Activated CD4-positive, alpha-beta T cell treated with anti-CD3 and anti-CD28 coated beads, Interleukin-2, amount 10 ng/mL, durations not matched to agents 24 days and 14 days (primary cell): ENCODE measurements at regions of chr3 and their contacts with region 1.

Region 1: DNA sequence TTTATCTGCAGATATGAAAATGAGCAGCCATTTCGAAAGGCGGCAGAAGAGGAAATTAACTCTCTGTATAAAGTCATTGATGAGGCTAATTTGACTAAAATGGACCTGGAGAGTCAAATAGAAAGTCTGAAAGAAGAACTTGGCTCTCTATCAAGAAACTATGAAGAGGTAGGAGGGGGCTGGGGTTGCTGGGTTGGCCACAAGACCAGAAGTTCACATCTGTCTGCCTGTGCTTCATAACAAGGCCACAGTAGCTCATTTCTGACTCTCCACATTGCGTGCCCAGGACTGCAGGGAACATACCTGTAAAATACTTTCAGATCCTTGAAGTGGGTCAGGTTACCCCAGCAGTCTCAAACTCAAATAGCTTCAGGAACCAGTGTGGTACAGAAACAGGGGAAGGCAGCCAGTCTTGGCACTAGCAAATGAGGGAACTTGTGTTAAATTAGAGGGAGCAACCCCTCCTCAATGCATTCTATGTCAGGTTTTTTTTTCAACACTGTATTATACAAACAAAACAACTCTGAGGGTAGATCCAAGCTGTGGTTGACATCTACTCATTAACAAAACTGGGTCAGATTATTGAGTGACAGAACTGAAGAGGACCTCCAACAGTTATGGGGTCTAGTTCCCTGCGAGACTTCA is 48.7 kb downstream of the BFSP2 start:
- DNase-seq: peak; percentile 75
- H3K4me3 Mint-ChIP-seq: no peak overlapping the region
- H3K27ac Mint-ChIP-seq: peak overlapping the region; percentile 69
- H3K4me1 Mint-ChIP-seq: peaks cover 26% of the 10 kb centered on the region
- H3K27me3 Mint-ChIP-seq: peaks cover 3% of the 10 kb centered on the region

Region 2: GRCh38 chr3:133464573-133464972 is 16.0 kb after region 1 on chr3:
- intact Hi-C with region 1: loop called (anchors 2 kb)
- DNase-seq: no peak
- H3K4me3 Mint-ChIP-seq: no peak overlapping the region
- H3K27ac Mint-ChIP-seq: no peak overlapping the region
- H3K4me1 Mint-ChIP-seq: peaks cover 40% of the 10 kb centered on the region
- H3K27me3 Mint-ChIP-seq: no peaks in the 10 kb centered on the region

Region 3: GRCh38 chr3:133475245-133476010 is 26.8 kb after region 1 on chr3:
- intact Hi-C with region 1: loop called (anchors 1 kb)
- DNase-seq: peak; percentile 80
- H3K4me3 Mint-ChIP-seq: peak overlapping the region; percentile 6
- H3K27ac Mint-ChIP-seq: peak overlapping the region; percentile 70
- H3K4me1 Mint-ChIP-seq: peaks cover 46% of the 10 kb centered on the region
- H3K27me3 Mint-ChIP-seq: no peaks in the 10 kb centered on the region

Region 4: DNA sequence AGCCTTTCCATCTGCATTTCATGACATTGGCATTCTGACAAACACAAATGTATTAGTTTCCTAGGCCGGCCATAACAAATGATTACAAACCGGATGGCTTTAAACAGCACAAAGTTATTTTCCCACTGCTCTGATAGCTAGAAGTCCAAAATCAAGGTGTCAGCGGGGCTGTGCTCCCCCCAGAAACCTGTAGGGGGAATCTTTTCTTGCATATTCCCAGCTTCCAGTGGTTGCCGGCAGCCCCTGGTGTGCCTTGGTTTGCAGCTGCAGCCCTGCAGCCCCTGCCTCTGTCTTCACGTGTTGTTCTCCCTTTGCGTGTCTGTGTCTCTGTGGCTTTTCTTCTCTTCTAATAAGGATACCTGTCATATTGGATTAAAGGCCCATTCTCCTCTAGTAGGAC is 45.9 kb after region 1 on chr3:
- intact Hi-C with region 1: loop called (anchors 1 kb)
- DNase-seq: no peak
- H3K4me3 Mint-ChIP-seq: no peak overlapping the region
- H3K27ac Mint-ChIP-seq: no peak overlapping the region
- H3K4me1 Mint-ChIP-seq: peaks cover 33% of the 10 kb centered on the region
- H3K27me3 Mint-ChIP-seq: no peaks in the 10 kb centered on the region

Region 5: DNA sequence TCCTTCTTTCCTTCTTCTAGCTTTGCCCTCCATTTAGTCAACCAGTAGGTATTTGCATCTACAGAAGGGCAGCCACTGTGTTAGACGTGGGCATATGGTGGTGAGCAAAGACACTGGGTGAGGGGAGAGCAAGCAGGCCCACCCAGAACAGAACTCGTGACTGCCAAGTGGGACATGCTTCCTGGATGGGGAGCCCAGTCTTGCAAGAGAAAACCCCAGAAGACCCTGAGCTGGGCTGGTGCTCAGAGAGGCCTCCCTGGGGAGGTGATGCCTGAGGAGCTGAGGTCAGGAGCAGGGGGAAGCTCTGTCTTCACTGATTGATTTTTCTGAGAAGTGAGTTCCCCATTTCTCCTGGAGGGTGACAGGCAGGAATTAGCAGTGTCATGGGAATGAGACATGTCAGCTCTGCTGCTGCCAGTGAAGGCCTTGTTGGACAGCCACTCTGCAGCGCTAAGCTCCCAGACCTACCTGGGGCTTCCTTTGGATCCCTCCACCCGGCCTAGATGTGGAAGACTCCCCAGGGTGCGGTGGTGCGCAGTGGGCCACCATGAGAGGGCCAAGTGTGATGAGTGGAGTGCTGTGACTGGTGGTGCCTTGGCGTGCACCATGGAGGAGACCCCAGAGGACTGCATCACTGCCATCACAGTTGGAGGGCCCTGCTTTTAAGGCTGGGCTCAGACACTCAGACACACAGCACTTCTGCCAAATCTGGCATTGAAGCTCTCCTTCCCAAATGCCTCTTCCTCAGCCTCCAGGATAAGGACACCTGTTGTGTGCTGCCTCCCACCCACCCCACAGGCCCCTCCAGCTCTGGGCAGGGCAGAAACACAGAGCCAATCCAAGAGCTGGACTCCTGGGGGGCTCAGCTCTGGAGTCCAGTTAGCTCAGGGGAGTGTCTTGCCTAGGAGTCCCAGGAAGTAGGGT is 253.1 kb after region 1 on chr3:
- intact Hi-C with region 1: no loop called
- DNase-seq: no peak
- H3K4me3 Mint-ChIP-seq: no peak overlapping the region
- H3K27ac Mint-ChIP-seq: no peak overlapping the region
- H3K4me1 Mint-ChIP-seq: no peaks in the 10 kb centered on the region
- H3K27me3 Mint-ChIP-seq: peaks cover 12% of the 10 kb centered on the region

Region 6: GRCh38 chr3:133927540-133928066 is 479.0 kb after region 1 on chr3:
- intact Hi-C with region 1: loop called (anchors 10 kb)
- DNase-seq: peak; percentile 92
- H3K4me3 Mint-ChIP-seq: peak overlapping the region; percentile 64
- H3K27ac Mint-ChIP-seq: no peak overlapping the region
- H3K4me1 Mint-ChIP-seq: peaks cover 5% of the 10 kb centered on the region
- H3K27me3 Mint-ChIP-seq: peaks cover 33% of the 10 kb centered on the region

Region 7: GRCh38 chr3:134104031-134104430 is 655.4 kb after region 1 on chr3:
- intact Hi-C with region 1: no loop called
- DNase-seq: no peak
- H3K4me3 Mint-ChIP-seq: no peak overlapping the region
- H3K27ac Mint-ChIP-seq: no peak overlapping the region
- H3K4me1 Mint-ChIP-seq: no peaks in the 10 kb centered on the region
- H3K27me3 Mint-ChIP-seq: peaks cover 1% of the 10 kb centered on the region

Region 8: GRCh38 chr3:134485718-134486576 is 1037.3 kb after region 1 on chr3 and contains the starts of genes ANAPC13 and CEP63:
- intact Hi-C with region 1: loop called (anchors 10 kb)
- DNase-seq: peak; percentile 97
- H3K4me3 Mint-ChIP-seq: peak within 1 kb of the TSS; percentile 85
- H3K27ac Mint-ChIP-seq: peak within 1 kb of the TSS; percentile 98
- H3K4me1 Mint-ChIP-seq: peaks cover 38% of the 10 kb centered on the region
- H3K27me3 Mint-ChIP-seq: no peaks in the 10 kb centered on the region
- total RNA-seq, gene ANAPC13: 29.7 and 30.0 TPM in 2 replicates
- total RNA-seq, gene CEP63: 18.6 and 20.5 TPM in 2 replicates